Calu3 (cell line): ENCODE measurements at regions of chr11 and their contacts with region 1.

Region 1: DNA sequence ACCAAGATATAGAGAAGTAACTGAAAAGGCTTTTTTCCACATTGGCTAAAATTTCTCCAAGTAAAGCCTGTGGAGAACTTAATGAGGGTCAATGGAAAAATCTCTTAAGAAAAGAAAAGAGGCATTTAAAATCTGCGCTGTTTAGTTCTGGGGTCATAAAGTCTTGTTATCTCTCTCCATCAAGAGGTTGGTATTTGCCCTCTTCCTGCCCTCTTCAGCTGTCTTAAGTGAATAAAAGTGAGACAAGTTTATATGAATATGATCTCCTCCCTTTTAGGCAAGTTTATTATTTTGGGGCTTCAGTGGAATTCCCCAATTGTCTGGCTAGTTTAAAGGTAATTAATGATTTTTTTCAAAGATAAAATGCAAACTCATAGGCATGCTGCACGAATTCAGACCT is 89.6 kb downstream of the ARL14EP start:
- DNase-seq: no peak
- H3K4me3 Mint-ChIP-seq: no peak overlapping the region
- H3K27ac Mint-ChIP-seq: no peak overlapping the region
- H3K4me1 Mint-ChIP-seq: no peaks in the 10 kb centered on the region
- H3K27me3 Mint-ChIP-seq: peaks cover 15% of the 10 kb centered on the region
- CTCF ChIP-seq: no peak

Region 2: DNA sequence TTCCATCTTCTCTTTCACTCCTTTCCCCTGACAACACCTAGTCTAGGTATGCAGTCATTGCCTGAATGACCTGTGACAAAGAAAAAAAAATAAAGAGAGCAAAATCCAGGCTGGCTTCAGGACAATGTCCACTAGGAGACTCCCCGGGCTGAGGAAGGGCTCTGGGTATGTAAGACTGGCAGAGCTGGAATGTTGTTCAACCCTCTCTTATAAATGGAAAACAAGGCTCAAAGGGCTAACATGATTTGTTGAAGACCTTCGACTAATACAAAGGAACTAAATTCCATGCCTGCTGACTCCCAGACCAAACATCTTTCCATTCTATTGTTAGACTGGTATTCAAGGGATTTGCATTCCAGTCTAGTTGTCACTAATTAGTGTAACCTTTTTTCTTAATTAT is 32.6 kb after region 1 on chr11:
- CTCF ChIA-PET with region 1: no interaction called
- intact Hi-C with region 1: loop called (anchors 1 kb)
- DNase-seq: no peak
- H3K4me3 Mint-ChIP-seq: no peak overlapping the region
- H3K27ac Mint-ChIP-seq: no peak overlapping the region
- H3K4me1 Mint-ChIP-seq: no peaks in the 10 kb centered on the region
- H3K27me3 Mint-ChIP-seq: peaks cover 16% of the 10 kb centered on the region
- CTCF ChIP-seq: no peak